Activated CD4-positive, alpha-beta T cell treated with anti-CD3 and anti-CD28 coated beads, Interleukin-2, amount 10 ng/mL, durations not matched to agents 24 days and 14 days (primary cell): ENCODE measurements at regions of chr21 and their contacts with region 1.

Region 1: DNA sequence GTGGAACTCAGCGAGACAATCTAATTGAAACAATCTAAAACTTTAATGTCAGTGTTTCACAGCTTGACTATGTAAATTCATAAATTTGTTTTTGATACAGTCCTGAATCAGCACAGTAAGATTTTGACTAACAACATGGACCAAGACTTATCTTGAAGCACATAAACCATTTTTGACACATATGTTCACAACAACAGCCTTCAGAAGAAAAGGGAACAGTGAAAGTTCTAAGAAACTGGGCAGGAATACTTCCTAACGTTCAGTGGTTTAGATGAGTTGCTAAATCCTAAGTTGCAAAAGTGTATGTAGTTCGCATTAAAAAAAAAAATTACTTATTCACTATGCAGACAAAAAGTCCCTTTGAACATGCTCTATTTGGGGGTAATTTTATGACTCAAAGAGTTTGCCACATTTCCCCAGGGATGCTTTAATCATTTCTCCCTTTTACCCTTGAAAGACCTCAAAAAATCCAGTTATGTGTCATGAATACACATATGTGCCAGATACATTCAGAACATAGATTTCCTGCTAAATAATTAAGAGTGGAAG is 120.2 kb downstream of the MRPL39 start:
- DNase-seq: peak; percentile 49
- H3K4me3 Mint-ChIP-seq: peak overlapping the region; percentile 63
- H3K27ac Mint-ChIP-seq: peak overlapping the region; percentile 91
- H3K4me1 Mint-ChIP-seq: peaks cover 52% of the 10 kb centered on the region
- H3K27me3 Mint-ChIP-seq: no peaks in the 10 kb centered on the region

Region 2: GRCh38 chr21:25428537-25428936 is 58.6 kb before region 1 on chr21:
- intact Hi-C with region 1: loop called (anchors 1 kb)
- DNase-seq: no peak
- H3K4me3 Mint-ChIP-seq: peak overlapping the region; percentile 42
- H3K27ac Mint-ChIP-seq: peak overlapping the region; percentile 57
- H3K4me1 Mint-ChIP-seq: peaks cover 36% of the 10 kb centered on the region
- H3K27me3 Mint-ChIP-seq: no peaks in the 10 kb centered on the region

Region 3: DNA sequence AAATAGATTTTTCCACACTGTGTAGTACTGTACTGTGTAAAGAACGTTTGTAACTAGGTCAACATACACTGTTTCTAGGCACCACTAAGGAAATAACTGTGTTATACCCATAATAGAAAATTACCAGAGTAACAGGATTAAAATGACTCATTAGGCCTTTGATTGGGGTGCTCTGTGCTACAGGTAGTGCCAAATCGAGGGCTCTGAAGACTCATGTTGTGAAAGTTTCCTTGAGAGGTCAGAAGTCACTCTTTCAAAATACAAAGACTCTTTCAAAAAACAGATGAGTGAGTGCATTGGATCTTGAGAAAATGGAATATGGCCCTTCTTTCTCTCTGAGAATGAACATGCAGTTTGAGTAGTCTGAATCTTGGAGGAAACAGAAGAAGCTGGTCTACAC is 22.8 kb before region 1 on chr21:
- intact Hi-C with region 1: loop called (anchors 1 kb)
- DNase-seq: peak; percentile 73
- H3K4me3 Mint-ChIP-seq: peak overlapping the region; percentile 69
- H3K27ac Mint-ChIP-seq: peak overlapping the region; percentile 98
- H3K4me1 Mint-ChIP-seq: peaks cover 48% of the 10 kb centered on the region
- H3K27me3 Mint-ChIP-seq: no peaks in the 10 kb centered on the region

Region 4: DNA sequence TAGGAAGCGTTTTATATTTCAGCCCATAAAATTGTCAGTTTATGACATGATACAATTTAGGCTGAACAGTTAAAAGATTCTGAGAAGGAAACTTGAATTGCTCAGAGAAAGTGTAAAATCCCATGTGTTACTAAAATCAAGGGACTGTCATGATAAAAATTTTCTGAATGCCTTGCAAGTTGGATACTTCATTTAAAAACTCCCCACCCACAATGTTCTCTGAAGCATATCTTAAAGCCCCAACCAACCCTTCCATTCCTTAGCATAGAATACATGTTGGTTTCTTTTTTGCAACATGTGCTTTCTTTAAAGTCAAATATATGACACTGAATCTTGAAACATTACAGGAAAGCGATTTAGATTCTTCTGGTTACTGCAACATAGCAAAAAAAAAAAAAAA is 22.7 kb after region 1 on chr21:
- intact Hi-C with region 1: loop called (anchors 1 kb)
- DNase-seq: no peak
- H3K4me3 Mint-ChIP-seq: peak overlapping the region; percentile 39
- H3K27ac Mint-ChIP-seq: peak overlapping the region; percentile 81
- H3K4me1 Mint-ChIP-seq: peaks cover 46% of the 10 kb centered on the region
- H3K27me3 Mint-ChIP-seq: no peaks in the 10 kb centered on the region